Activated CD4-positive, alpha-beta memory T cell treated with anti-CD3 and anti-CD28 coated beads for 36 hours (primary cell): ENCODE measurements at regions of chr1 and their contacts with region 1.

Region 1: GRCh38 chr1:155227261-155228095 is 19.0 kb downstream of the MTX1 start:
- DNase-seq: peak; percentile 100
- H3K4me3 Mint-ChIP-seq: peak overlapping the region; percentile 89
- H3K27ac Mint-ChIP-seq: peak overlapping the region; percentile 98
- H3K4me1 Mint-ChIP-seq: peaks cover 26% of the 10 kb centered on the region
- H3K27me3 Mint-ChIP-seq: no peaks in the 10 kb centered on the region

Region 2: GRCh38 chr1:155208541-155209311 is 18.8 kb before region 1 on chr1 and contains the start of gene MTX1:
- CTCF ChIA-PET with region 1: interaction called, 82 read pairs
- POLR2A ChIA-PET with region 1: interaction called, 12 read pairs
- intact Hi-C with region 1: loop called (anchors 1 kb)
- DNase-seq: peak; percentile 92
- H3K4me3 Mint-ChIP-seq: peak within 1 kb of the TSS; percentile 83
- H3K27ac Mint-ChIP-seq: peak within 1 kb of the TSS; percentile 89
- H3K4me1 Mint-ChIP-seq: peaks cover 29% of the 10 kb centered on the region
- H3K27me3 Mint-ChIP-seq: no peaks in the 10 kb centered on the region
- total RNA-seq, gene MTX1: 45.2 to 47.9 TPM

Region 3: DNA sequence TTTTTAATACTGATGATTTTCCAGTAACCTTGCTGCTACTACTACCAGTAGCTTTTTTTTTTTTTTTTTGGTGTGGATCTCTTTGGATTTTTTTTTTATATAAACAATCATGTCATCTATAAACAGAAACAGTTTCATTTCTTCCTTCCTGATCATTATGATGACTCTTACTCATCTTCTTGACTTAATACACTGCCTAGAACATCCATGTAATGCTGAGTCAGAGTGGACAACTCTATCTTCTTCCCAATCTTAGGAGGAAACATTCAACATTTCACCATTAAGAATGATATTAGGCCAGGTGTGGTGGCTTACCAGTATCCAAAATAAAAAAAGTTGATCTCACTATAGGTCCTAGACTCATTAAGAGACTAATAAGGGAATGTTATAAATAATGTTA is 162.3 kb after region 1 on chr1:
- CTCF ChIA-PET with region 1: no interaction called
- POLR2A ChIA-PET with region 1: no interaction called
- intact Hi-C with region 1: no loop called
- DNase-seq: no peak
- H3K4me3 Mint-ChIP-seq: no peak overlapping the region
- H3K27ac Mint-ChIP-seq: peak overlapping the region; percentile 29
- H3K4me1 Mint-ChIP-seq: no peaks in the 10 kb centered on the region
- H3K27me3 Mint-ChIP-seq: no peaks in the 10 kb centered on the region